ENCODE measurements at regions of chr1 and their contacts with region 1.

Region 1: GRCh38 chr1:27858072-27858958 is 14.0 kb upstream of the THEMIS2 start:
- DNase-seq: peak; percentile 91
- H3K4me3 ChIP-seq: peak overlapping the region in 1 of 4 donors; percentile 19
- H3K27ac ChIP-seq: peak overlapping the region in 2 of 4 donors; percentile 17 to 37
- H3K4me1 ChIP-seq: peaks cover 0 to 7% (median 2%) of the 10 kb centered on the region in 4 donors
- H3K27me3 ChIP-seq: no peaks in the 10 kb centered on the region
- CTCF ChIP-seq: peak; percentile 94 to 97 (median 96)
- EP300 ChIP-seq: no peak
- POLR2A ChIP-seq: no peak

Region 2: DNA sequence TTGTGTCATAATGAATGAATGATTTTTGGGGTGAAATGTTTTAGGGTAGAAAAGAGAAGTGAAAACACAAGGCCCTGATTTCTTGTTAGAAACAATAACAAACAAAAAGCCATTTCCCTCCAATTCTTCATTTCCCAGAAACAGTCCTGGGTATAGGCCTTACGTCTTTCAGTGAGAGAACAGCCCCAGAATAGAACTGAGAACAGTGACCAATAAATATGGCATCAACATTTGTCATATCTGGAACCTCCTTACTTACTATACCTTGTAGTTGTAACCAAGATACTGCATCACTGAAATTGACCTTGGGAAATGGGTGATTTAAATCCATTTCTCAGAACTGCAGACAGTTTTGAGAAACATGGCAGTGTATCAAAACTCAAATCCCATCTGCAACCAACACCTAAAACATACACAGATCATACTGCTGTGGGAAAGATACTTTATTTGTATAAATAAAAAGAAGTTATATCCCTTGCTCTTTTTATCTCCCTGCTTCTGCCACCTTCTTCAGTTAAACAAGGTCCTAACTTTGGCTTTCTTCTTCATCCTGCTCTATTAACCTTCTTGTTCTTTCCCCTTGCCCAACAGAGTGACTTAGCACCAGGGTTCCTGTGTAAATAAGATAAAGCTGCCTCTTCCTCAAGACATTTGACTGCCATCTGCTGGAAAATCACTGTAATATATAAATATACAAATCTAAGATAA is 121.0 kb after region 1 on chr1:
- in situ Hi-C with region 1: loop called (anchors 5 to 25 kb)
- intact Hi-C with region 1: loop called (anchors 5 kb)
- DNase-seq: no peak
- H3K4me3 ChIP-seq: no peak overlapping the region
- H3K27ac ChIP-seq: no peak overlapping the region
- H3K4me1 ChIP-seq: peaks cover 0 to 3% (median 0%) of the 10 kb centered on the region in 4 donors
- H3K27me3 ChIP-seq: no peaks in the 10 kb centered on the region
- CTCF ChIP-seq: peak; percentile 41 to 66 (median 59)
- EP300 ChIP-seq: no peak
- POLR2A ChIP-seq: no peak

Region 3: DNA sequence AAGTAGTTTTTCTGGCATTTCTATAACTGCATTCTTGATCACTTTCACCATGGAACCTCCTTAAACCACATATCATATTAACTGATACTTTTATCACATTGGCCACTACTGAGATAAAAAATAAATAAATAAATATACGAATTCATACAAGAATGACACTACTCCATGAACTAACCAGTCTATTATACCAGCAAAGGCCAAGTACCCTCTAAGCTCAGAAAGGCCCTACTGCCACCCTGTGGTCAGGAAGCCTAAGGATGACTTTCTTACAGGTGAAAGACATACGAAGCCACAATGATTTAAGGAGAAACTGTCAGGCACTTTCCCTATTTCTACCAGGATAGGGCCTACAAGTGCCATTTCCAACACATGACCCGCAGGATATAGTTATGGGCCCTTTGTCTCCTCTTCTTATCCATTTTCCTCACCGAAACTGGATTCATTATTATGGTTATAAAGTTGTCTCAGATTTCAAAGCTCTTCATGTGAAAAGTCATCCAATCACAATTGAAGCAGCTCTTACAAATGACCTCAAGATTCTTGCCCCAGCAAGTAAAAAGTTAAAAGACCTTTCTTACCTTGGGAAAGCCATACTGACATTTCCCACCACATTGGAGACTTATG is 350.6 kb after region 1 on chr1:
- in situ Hi-C with region 1: loop called in 1 of 4 experiments (anchors 25 kb)
- intact Hi-C with region 1: no loop called
- DNase-seq: peak; percentile 73
- H3K4me3 ChIP-seq: no peak overlapping the region
- H3K27ac ChIP-seq: no peak overlapping the region
- H3K4me1 ChIP-seq: peaks cover 0 to 5% (median 0%) of the 10 kb centered on the region in 4 donors
- H3K27me3 ChIP-seq: no peaks in the 10 kb centered on the region
- CTCF ChIP-seq: peak; percentile 55 to 68 (median 60)
- EP300 ChIP-seq: no peak
- POLR2A ChIP-seq: no peak

Region 4: GRCh38 chr1:29703596-29704370 is 1845.5 kb after region 1 on chr1:
- in situ Hi-C with region 1: no loop called
- intact Hi-C with region 1: loop called (anchors 10 kb)
- DNase-seq: no peak
- H3K4me3 ChIP-seq: no peak overlapping the region
- H3K27ac ChIP-seq: no peak overlapping the region
- H3K4me1 ChIP-seq: no peaks in the 10 kb centered on the region
- H3K27me3 ChIP-seq: peaks cover 15% of the 10 kb centered on the region
- CTCF ChIP-seq: peak; percentile 51 to 61 (median 58)
- EP300 ChIP-seq: no peak
- POLR2A ChIP-seq: no peak

Measured in transverse colon (tissue), 4 donors.